Psoas muscle (tissue), 8 donors: ENCODE measurements at regions of chr14 and their contacts with region 1.

Region 1: GRCh38 chr14:101628471-101628966 is 67.2 kb downstream of the DIO3 start:
- DNase-seq: peak; percentile 78 to 89
- ATAC-seq: peak; percentile 94 to 97 (median 94)
- H3K4me3 ChIP-seq: peak overlapping the region; percentile 42
- H3K27ac ChIP-seq: no peak overlapping the region
- H3K4me1 ChIP-seq: peaks cover 4% of the 10 kb centered on the region
- H3K27me3 ChIP-seq: no peaks in the 10 kb centered on the region
- CTCF ChIP-seq: peak; percentile 100

Region 2: GRCh38 chr14:100383727-100384158 is 1244.8 kb before region 1 on chr14:
- intact Hi-C with region 1: loop called (anchors 2 to 10 kb)
- DNase-seq: peak; percentile 55 to 72
- ATAC-seq: peak; percentile 67 to 87 (median 80)
- H3K4me3 ChIP-seq: no peak overlapping the region
- H3K27ac ChIP-seq: no peak overlapping the region
- H3K4me1 ChIP-seq: peaks cover 13% of the 10 kb centered on the region
- H3K27me3 ChIP-seq: no peaks in the 10 kb centered on the region
- CTCF ChIP-seq: peak; percentile 77

Region 3: GRCh38 chr14:100417466-100417865 is 1211.1 kb before region 1 on chr14:
- intact Hi-C with region 1: loop called in 1 of 2 experiments (anchors 10 kb)
- DNase-seq: peak; percentile 39 to 64
- ATAC-seq: peak; percentile 56 to 78 (median 77)
- H3K4me3 ChIP-seq: no peak overlapping the region
- H3K27ac ChIP-seq: no peak overlapping the region
- H3K4me1 ChIP-seq: no peaks in the 10 kb centered on the region
- H3K27me3 ChIP-seq: no peaks in the 10 kb centered on the region
- CTCF ChIP-seq: no peak

Region 4: GRCh38 chr14:100440187-100440631 is 1188.3 kb before region 1 on chr14:
- intact Hi-C with region 1: loop called in 1 of 2 experiments (anchors 10 kb)
- DNase-seq: peak; percentile 76 to 86
- ATAC-seq: peak; percentile 93 to 98 (median 96)
- H3K4me3 ChIP-seq: no peak overlapping the region
- H3K27ac ChIP-seq: peak overlapping the region; percentile 21
- H3K4me1 ChIP-seq: peaks cover 16% of the 10 kb centered on the region
- H3K27me3 ChIP-seq: no peaks in the 10 kb centered on the region
- CTCF ChIP-seq: peak; percentile 79

Region 5: DNA sequence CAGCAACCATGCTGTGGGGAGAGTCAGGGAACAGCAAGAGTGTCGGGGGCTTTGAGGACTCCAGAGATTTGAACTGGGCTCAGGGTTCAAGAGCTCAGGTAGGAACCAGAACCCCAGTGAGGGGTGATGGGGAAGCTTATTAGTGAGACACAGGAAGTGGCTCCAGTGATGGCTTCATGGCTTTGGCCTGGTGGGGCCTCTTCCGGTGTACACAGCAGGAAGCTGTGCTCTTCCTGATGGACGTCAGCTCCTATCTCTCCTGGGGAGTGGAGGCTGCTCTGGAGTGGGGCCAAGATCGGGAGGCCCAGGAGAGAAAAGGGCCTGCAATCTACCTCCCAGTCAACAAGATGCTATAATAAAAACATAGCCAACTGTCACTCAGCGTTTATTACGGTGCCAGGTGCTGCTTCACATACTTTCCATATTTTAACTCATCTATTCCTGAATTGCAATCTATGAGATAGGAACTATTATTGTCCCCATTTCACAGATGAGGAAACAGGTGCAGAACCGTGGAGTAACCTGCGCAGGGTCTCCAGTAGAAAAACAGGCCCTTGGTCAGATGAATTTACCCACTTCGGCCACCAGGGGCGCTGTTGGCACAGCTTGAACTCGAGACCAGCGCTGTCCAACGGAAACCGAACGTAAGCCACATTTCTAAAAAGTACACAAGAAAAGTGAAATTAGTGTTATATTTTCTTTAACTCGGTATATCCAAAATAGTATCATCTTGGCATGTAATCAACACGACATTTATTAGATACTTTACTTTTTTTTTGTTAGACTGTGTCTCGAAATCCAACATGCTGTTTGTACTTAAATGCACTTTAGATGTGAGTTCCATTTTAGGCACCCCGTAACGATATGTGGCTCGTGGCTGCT is 965.4 kb before region 1 on chr14:
- intact Hi-C with region 1: loop called in 1 of 2 experiments (anchors 5 kb)
- DNase-seq: peak; percentile 70 to 78
- ATAC-seq: peak in 2 of 4 donors; percentile 50 to 64
- H3K4me3 ChIP-seq: no peak overlapping the region
- H3K27ac ChIP-seq: no peak overlapping the region
- H3K4me1 ChIP-seq: no peaks in the 10 kb centered on the region
- H3K27me3 ChIP-seq: peaks cover 0 to 46% (median 14%) of the 10 kb centered on the region in 3 donors
- CTCF ChIP-seq: peak; percentile 88

Region 6: DNA sequence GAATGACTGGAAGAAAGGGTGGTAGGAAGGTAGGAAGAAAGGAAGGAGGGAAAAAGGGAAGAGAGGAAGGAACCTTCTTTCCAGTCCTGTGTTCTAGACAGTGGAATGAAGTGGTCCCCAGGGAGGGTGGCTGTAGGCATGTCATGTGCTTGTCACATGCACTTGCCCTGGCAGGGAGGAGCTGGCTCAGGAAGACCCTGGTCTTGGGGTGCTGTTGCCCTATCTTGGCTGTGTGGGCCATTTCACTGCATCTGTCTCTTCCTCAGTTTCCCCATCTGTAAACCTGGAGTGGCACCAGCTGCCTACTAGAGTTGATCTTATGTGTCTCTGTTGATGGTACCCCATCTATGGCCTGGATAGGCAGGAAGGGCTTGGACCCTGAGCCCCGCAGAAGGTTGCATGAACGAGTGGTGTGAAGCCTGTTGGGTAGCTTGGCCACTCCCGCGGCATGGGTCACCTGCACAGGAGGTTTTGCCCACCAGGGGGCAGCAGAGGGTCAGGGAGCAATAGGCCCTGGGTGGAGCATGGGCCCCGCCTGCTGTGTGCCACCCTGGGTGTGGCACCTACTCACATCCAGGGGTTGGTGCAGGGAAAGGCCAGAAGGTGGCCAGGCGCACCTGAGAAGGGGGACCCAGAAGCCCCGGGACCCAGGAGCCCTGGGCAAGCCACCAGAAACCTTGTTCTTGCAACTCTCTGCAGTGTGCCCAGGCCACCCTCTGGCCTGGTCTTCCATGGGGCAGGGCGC is 777.5 kb before region 1 on chr14:
- intact Hi-C with region 1: loop called (anchors 5 kb)
- DNase-seq: peak; percentile 78
- ATAC-seq: peak; percentile 62 to 90 (median 75)
- H3K4me3 ChIP-seq: no peak overlapping the region
- H3K27ac ChIP-seq: no peak overlapping the region
- H3K4me1 ChIP-seq: no peaks in the 10 kb centered on the region
- H3K27me3 ChIP-seq: peaks cover 0 to 1% (median 0%) of the 10 kb centered on the region in 3 donors
- CTCF ChIP-seq: peak; percentile 68